ENCODE measurements at regions of chr13 and their contacts with region 1.

Region 1: DNA sequence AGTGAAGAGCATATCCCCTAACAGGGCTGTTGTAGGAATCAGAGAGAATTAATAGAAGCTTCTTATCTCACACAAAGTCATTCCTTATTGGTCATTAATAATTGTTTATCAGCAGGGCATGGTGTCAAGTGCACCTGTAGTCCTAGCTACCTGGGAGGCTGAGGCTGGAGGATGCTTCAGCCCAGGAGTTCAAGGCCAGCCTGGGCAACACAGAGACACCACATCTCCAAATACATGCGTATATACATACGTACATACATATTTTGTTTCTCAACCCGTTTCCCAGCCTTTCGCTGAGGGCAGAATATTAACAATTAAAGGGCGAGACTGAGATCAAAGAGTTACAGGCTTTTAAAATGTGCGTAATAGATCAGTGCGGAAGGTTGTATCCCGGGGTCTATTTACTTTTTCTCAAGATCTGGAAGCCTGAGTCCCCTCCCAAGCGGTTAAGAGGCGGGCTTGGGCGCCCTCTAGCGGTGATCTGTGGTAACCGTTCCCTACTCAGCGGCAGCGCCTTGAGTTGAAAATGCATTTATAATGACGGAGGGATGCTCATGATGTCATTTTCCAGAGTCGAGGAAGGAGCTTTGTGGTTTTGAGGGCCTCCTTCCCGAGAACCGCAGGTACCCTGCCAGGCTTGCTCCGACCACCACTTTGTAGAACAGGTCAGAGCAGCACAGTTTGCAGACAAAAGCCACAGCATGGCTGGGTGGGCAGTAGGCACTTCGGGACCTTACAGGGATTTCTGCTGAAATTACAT is 169.6 kb upstream of the GPR12 start:
- DNase-seq: peak; percentile 43 to 71 (median 66)
- ATAC-seq: peak; percentile 78
- H3K4me3 ChIP-seq: no peak overlapping the region
- H3K27ac ChIP-seq: no peak overlapping the region
- H3K4me1 ChIP-seq: no peaks in the 10 kb centered on the region
- H3K27me3 ChIP-seq: no peaks in the 10 kb centered on the region
- CTCF ChIP-seq: peak; percentile 62 to 96 (median 76)
- POLR2A ChIP-seq: no peak

Region 2: DNA sequence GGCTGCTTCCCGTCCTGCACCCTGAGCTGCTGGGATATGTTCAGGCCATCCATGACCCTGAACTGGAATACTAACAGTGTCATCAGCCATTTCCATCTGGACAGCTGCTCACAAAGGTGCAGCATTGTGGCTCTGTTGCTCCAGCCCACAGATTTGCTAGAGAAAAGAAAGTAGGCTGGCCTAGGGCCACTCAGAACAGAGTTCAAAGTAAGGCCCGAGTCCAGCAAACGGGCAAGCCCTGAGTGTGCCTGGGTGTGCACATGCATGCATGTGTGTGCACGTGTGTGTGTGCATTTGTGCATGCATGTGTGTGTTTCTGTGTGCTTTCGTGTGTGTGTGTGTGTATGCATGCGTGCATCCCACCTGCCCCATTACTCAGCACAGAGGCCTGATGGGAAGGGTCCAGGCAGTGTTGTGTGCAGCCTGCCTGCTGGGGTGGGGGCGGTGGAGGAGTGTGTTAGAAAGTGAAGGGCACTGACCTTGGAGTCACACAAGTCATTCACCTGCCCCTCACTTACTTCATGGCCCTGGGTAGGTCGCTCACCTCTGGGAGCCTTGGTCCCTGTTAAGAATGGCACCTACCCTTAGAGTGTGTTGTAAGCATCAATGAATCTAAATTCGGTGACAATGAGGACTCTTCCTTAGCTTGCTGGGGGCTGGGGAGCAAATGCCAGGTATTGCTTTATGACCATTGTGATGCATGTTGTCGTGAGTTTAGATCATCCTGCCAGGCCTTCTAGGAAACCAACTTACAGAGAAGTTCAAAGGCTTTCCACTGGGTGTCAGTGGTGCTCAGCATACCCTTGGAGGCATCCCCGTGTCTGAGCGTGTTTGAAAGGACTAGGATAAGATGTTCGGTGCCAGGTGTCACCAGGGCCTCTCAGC is 222.8 kb before region 1 on chr13:
- intact Hi-C with region 1: loop called (anchors 10 kb)
- DNase-seq: peak in 2 of 4 donors; percentile 20 to 38
- ATAC-seq: peak; percentile 42
- H3K4me3 ChIP-seq: no peak overlapping the region
- H3K27ac ChIP-seq: no peak overlapping the region
- H3K4me1 ChIP-seq: no peaks in the 10 kb centered on the region
- H3K27me3 ChIP-seq: no peaks in the 10 kb centered on the region
- CTCF ChIP-seq: peak in 4 of 7 experiments; percentile 27 to 45 (median 41)
- POLR2A ChIP-seq: no peak

Region 3: GRCh38 chr13:27242706-27243105 is 312.6 kb after region 1 on chr13:
- intact Hi-C with region 1: no loop called
- DNase-seq: no peak
- ATAC-seq: no peak
- H3K4me3 ChIP-seq: no peak overlapping the region
- H3K27ac ChIP-seq: no peak overlapping the region
- H3K4me1 ChIP-seq: no peaks in the 10 kb centered on the region
- H3K27me3 ChIP-seq: no peaks in the 10 kb centered on the region
- CTCF ChIP-seq: no peak
- POLR2A ChIP-seq: no peak

Measured in body of pancreas (tissue), 4 donors.